Naive thymus-derived CD4-positive, alpha-beta T cell (primary cell): ENCODE measurements at regions of chr1 and their contacts with region 1.

Region 1: GRCh38 chr1:27858072-27858958 is 14.0 kb upstream of the THEMIS2 start:
- DNase-seq: peak; percentile 71 to 86 (median 80)
- ATAC-seq: peak; percentile 97
- H3K4me3 ChIP-seq: no peak overlapping the region
- H3K4me3 Mint-ChIP-seq: peak overlapping the region in 6 of 10 donors; percentile 14 to 61 (median 40)
- H3K27ac ChIP-seq: no peak overlapping the region
- H3K27ac Mint-ChIP-seq: peak overlapping the region in 5 of 9 donors; percentile 33 to 78 (median 74)
- H3K4me1 ChIP-seq: peaks cover 0 to 11% of the 10 kb centered on the region in 2 donors
- H3K4me1 Mint-ChIP-seq: peaks cover 7 to 36% (median 28%) of the 10 kb centered on the region in 7 donors
- H3K27me3 ChIP-seq: no peaks in the 10 kb centered on the region
- H3K27me3 Mint-ChIP-seq: no peaks in the 10 kb centered on the region

Region 2: GRCh38 chr1:27891196-27891889 is 33.0 kb after region 1 on chr1:
- CTCF ChIA-PET with region 1: interaction called, 3 read pairs
- POLR2A ChIA-PET with region 1: interaction called, 3 read pairs
- intact Hi-C with region 1: loop called (anchors 1 to 5 kb)
- DNase-seq: peak in 6 of 9 donors; percentile 16 to 59 (median 38)
- ATAC-seq: peak; percentile 78
- H3K4me3 ChIP-seq: no peak overlapping the region
- H3K4me3 Mint-ChIP-seq: peak overlapping the region in 9 of 10 donors; percentile 8 to 69 (median 42)
- H3K27ac ChIP-seq: peak overlapping the region; percentile 58
- H3K27ac Mint-ChIP-seq: peak overlapping the region; percentile 33 to 96 (median 88)
- H3K4me1 ChIP-seq: peaks cover 29 to 40% of the 10 kb centered on the region in 2 donors
- H3K4me1 Mint-ChIP-seq: peaks cover 27 to 78% (median 64%) of the 10 kb centered on the region in 7 donors
- H3K27me3 ChIP-seq: no peaks in the 10 kb centered on the region
- H3K27me3 Mint-ChIP-seq: no peaks in the 10 kb centered on the region

Region 3: GRCh38 chr1:27959400-27960217 is 101.3 kb after region 1 on chr1 and contains the start of gene XKR8:
- CTCF ChIA-PET with region 1: interaction called, 5 read pairs
- POLR2A ChIA-PET with region 1: interaction called, 3 read pairs
- intact Hi-C with region 1: loop called (anchors 1 to 2 kb)
- DNase-seq: peak; percentile 76 to 87 (median 85)
- ATAC-seq: peak; percentile 99
- H3K4me3 ChIP-seq: peak within 1 kb of the TSS; percentile 79
- H3K4me3 Mint-ChIP-seq: peak within 1 kb of the TSS; percentile 85 to 91 (median 88)
- H3K27ac ChIP-seq: peak within 1 kb of the TSS; percentile 91
- H3K27ac Mint-ChIP-seq: peak within 1 kb of the TSS; percentile 79 to 94 (median 91)
- H3K4me1 ChIP-seq: peaks cover 19 to 24% of the 10 kb centered on the region in 2 donors
- H3K4me1 Mint-ChIP-seq: peaks cover 12 to 39% (median 28%) of the 10 kb centered on the region in 7 donors
- H3K27me3 ChIP-seq: no peaks in the 10 kb centered on the region
- H3K27me3 Mint-ChIP-seq: peaks cover 0 to 7% (median 0%) of the 10 kb centered on the region in 5 donors
- total RNA-seq, gene XKR8: 8.4 to 15.8 (median 10.7) TPM

Region 4: DNA sequence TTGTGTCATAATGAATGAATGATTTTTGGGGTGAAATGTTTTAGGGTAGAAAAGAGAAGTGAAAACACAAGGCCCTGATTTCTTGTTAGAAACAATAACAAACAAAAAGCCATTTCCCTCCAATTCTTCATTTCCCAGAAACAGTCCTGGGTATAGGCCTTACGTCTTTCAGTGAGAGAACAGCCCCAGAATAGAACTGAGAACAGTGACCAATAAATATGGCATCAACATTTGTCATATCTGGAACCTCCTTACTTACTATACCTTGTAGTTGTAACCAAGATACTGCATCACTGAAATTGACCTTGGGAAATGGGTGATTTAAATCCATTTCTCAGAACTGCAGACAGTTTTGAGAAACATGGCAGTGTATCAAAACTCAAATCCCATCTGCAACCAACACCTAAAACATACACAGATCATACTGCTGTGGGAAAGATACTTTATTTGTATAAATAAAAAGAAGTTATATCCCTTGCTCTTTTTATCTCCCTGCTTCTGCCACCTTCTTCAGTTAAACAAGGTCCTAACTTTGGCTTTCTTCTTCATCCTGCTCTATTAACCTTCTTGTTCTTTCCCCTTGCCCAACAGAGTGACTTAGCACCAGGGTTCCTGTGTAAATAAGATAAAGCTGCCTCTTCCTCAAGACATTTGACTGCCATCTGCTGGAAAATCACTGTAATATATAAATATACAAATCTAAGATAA is 121.0 kb after region 1 on chr1:
- CTCF ChIA-PET with region 1: interaction called, 33 read pairs
- POLR2A ChIA-PET with region 1: interaction called, 3 read pairs
- intact Hi-C with region 1: loop called (anchors 1 to 2 kb)
- DNase-seq: peak in 7 of 9 donors; percentile 24 to 66 (median 53)
- ATAC-seq: peak; percentile 80
- H3K4me3 ChIP-seq: no peak overlapping the region
- H3K4me3 Mint-ChIP-seq: no peak overlapping the region
- H3K27ac ChIP-seq: no peak overlapping the region
- H3K27ac Mint-ChIP-seq: no peak overlapping the region
- H3K4me1 ChIP-seq: no peaks in the 10 kb centered on the region
- H3K4me1 Mint-ChIP-seq: peaks cover 0 to 3% (median 0%) of the 10 kb centered on the region in 7 donors
- H3K27me3 ChIP-seq: no peaks in the 10 kb centered on the region
- H3K27me3 Mint-ChIP-seq: no peaks in the 10 kb centered on the region

Region 5: DNA sequence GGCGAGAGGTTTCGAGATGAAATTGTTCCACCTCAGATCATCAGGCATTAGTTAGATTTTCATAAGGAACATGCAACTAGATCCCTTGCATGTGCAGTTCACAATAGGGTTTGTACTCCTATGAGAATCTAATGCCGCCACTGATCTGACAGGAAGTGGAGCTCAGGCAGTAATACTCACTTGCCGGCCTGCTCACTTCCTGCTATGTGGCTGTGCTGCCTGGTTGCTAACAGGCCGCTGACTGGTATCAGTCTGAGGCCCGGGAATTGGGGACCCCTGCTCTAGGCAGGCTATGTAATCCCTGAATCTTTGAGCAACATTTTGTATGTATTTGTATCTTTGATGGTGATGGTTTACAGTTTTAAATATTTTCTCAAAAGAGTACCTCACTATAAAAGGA is 134.0 kb after region 1 on chr1:
- CTCF ChIA-PET with region 1: interaction called, 8 read pairs
- POLR2A ChIA-PET with region 1: no interaction called
- intact Hi-C with region 1: loop called in 1 of 2 experiments (anchors 1 kb)
- DNase-seq: peak; percentile 20 to 65 (median 56)
- ATAC-seq: peak; percentile 86
- H3K4me3 ChIP-seq: no peak overlapping the region
- H3K4me3 Mint-ChIP-seq: peak overlapping the region; percentile 24 to 77 (median 32)
- H3K27ac ChIP-seq: peak overlapping the region; percentile 70
- H3K27ac Mint-ChIP-seq: peak overlapping the region; percentile 62 to 96 (median 80)
- H3K4me1 ChIP-seq: peaks cover 20 to 24% of the 10 kb centered on the region in 2 donors
- H3K4me1 Mint-ChIP-seq: peaks cover 14 to 50% (median 35%) of the 10 kb centered on the region in 7 donors
- H3K27me3 ChIP-seq: no peaks in the 10 kb centered on the region
- H3K27me3 Mint-ChIP-seq: no peaks in the 10 kb centered on the region

Region 6: GRCh38 chr1:28176492-28177470 is 318.5 kb after region 1 on chr1 and contains the start of gene PTAFR:
- CTCF ChIA-PET with region 1: no interaction called
- POLR2A ChIA-PET with region 1: no interaction called
- intact Hi-C with region 1: no loop called
- DNase-seq: no peak
- ATAC-seq: peak; percentile 79
- H3K4me3 ChIP-seq: no peak within 1 kb of the TSS
- H3K4me3 Mint-ChIP-seq: no peak within 1 kb of the TSS
- H3K27ac ChIP-seq: no peak within 1 kb of the TSS
- H3K27ac Mint-ChIP-seq: peak within 1 kb of the TSS in 1 of 9 donors; percentile 55
- H3K4me1 ChIP-seq: peaks cover 11 to 18% of the 10 kb centered on the region in 2 donors
- H3K4me1 Mint-ChIP-seq: peaks cover 24 to 42% (median 34%) of the 10 kb centered on the region in 7 donors
- H3K27me3 ChIP-seq: no peaks in the 10 kb centered on the region
- H3K27me3 Mint-ChIP-seq: peaks cover 0 to 79% (median 0%) of the 10 kb centered on the region in 5 donors
- total RNA-seq, gene PTAFR: 0.31 to 21.2 (median 1.2) TPM

Region 7: GRCh38 chr1:28208818-28209441 is 350.6 kb after region 1 on chr1:
- CTCF ChIA-PET with region 1: interaction called, 4 read pairs
- POLR2A ChIA-PET with region 1: no interaction called
- intact Hi-C with region 1: loop called (anchors 1 to 2 kb)
- DNase-seq: peak in 8 of 9 donors; percentile 43 to 67 (median 60)
- ATAC-seq: peak; percentile 85
- H3K4me3 ChIP-seq: no peak overlapping the region
- H3K4me3 Mint-ChIP-seq: no peak overlapping the region
- H3K27ac ChIP-seq: no peak overlapping the region
- H3K27ac Mint-ChIP-seq: peak overlapping the region in 3 of 9 donors; percentile 16 to 56 (median 45)
- H3K4me1 ChIP-seq: peaks cover 0 to 7% of the 10 kb centered on the region in 2 donors
- H3K4me1 Mint-ChIP-seq: peaks cover 6 to 13% (median 8%) of the 10 kb centered on the region in 7 donors
- H3K27me3 ChIP-seq: no peaks in the 10 kb centered on the region
- H3K27me3 Mint-ChIP-seq: no peaks in the 10 kb centered on the region

Region 8: DNA sequence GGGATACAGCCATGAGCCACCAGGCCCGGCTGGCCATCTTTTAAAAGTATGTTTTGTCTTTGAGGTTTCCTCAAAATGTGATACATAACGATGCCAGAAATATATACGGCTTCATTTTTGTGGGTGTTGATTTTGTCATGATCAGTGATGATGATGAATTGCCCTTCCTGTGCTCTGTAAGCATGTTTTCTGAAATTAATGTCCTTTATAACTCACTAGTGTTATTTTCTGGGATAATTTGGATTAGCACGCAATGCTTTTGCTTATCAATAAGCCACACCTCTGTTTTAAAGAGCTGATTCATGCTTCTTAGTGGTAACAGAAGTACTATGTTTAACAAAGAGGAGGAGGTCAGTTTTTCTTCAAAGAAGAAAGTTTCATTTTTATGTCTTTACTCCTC is 536.9 kb after region 1 on chr1:
- CTCF ChIA-PET with region 1: no interaction called
- POLR2A ChIA-PET with region 1: no interaction called
- intact Hi-C with region 1: no loop called
- DNase-seq: no peak
- ATAC-seq: no peak
- H3K4me3 ChIP-seq: no peak overlapping the region
- H3K4me3 Mint-ChIP-seq: no peak overlapping the region
- H3K27ac ChIP-seq: no peak overlapping the region
- H3K27ac Mint-ChIP-seq: peak overlapping the region in 1 of 9 donors; percentile 20
- H3K4me1 ChIP-seq: no peaks in the 10 kb centered on the region
- H3K4me1 Mint-ChIP-seq: peaks cover 0 to 18% (median 10%) of the 10 kb centered on the region in 7 donors
- H3K27me3 ChIP-seq: no peaks in the 10 kb centered on the region
- H3K27me3 Mint-ChIP-seq: no peaks in the 10 kb centered on the region